ENCODE measurements at regions of chr20 and their contacts with region 1.

Region 1: GRCh38 chr20:53915446-53916172 is 154.8 kb downstream of the BCAS1 start:
- DNase-seq: peak; percentile 95 to 98
- H3K4me3 ChIP-seq: peak overlapping the region; percentile 61
- H3K27ac ChIP-seq: peak overlapping the region; percentile 93
- H3K4me1 ChIP-seq: peaks cover 47% of the 10 kb centered on the region
- H3K27me3 ChIP-seq: no peaks in the 10 kb centered on the region
- CTCF ChIP-seq: peak; percentile 97

Region 2: DNA sequence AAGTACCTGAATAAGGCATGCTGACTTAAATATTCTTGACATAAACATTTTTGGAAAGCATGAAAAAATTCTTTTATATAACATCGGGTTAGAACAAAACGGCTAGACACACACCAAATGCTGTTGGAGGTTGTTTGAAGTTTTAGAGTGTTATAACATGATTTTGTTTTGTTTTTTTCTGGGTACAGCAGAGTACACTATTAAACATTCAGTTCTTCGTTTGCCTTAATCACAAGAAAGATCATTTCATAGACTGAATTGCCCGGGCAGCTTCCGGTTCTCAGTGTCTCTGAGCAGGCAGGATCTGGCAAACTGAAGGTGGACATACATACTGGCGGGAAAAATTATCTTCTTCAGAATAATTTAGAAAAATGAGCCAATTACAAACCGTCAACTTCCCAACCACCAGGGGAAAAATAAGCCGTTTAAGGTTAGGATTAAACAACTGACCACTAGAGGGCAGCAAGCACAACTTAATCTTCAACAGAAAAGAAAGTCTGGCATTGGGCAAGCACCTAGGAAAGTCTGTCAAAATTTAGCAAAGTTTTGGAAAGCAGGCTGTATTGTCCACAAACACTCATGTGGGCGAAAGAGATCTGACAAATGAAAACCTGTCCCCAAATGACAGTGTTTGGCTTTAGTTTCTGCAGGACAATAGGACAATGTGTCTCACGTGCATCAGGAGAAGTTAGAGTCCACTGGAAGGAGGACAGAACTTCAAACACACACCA is 337.0 kb before region 1 on chr20:
- CTCF ChIA-PET with region 1: interaction called, 5 read pairs
- POLR2A ChIA-PET with region 1: no interaction called
- intact Hi-C with region 1: loop called (anchors 1 kb)
- DNase-seq: peak; percentile 61 to 77
- H3K4me3 ChIP-seq: peak overlapping the region; percentile 49
- H3K27ac ChIP-seq: peak overlapping the region; percentile 91
- H3K4me1 ChIP-seq: peaks cover 64% of the 10 kb centered on the region
- H3K27me3 ChIP-seq: no peaks in the 10 kb centered on the region
- CTCF ChIP-seq: peak; percentile 96

Region 3: DNA sequence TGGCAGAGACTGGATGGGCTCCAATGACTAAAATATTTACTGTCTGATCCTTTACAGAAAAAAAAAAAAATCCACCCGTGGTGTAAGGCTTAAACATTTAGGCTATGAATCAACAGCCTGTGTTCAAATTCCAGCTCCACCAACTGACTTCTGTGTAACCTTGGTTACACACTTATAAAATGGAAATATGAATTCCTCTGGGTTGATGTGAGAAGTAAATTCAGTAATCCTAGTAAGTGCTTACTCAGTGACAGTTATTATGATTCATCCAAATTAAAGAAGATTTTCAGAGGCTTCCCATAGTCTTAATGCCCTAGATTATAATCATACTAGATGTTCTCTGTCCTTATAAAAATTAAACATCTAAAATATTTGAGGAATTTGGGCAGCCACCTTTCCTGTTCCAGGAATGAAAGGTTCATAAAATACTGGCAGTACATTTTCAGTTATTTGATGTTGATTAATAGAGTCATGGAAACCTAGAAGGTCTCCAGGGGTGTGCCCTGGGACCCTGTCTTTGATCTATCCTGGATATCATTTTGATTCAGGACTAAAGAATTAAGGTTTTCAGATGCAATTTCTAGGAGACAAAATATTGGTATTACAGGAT is 141.7 kb before region 1 on chr20:
- CTCF ChIA-PET with region 1: interaction called, 3 read pairs
- POLR2A ChIA-PET with region 1: interaction called, 3 read pairs
- intact Hi-C with region 1: loop called (anchors 5 kb)
- DNase-seq: peak; percentile 37 to 99
- H3K4me3 ChIP-seq: no peak overlapping the region
- H3K27ac ChIP-seq: peak overlapping the region; percentile 93
- H3K4me1 ChIP-seq: peaks cover 41% of the 10 kb centered on the region
- H3K27me3 ChIP-seq: no peaks in the 10 kb centered on the region
- CTCF ChIP-seq: no peak

Region 4: GRCh38 chr20:53883098-53883811 is 32.4 kb before region 1 on chr20:
- CTCF ChIA-PET with region 1: interaction called, 14 read pairs
- POLR2A ChIA-PET with region 1: no interaction called
- intact Hi-C with region 1: no loop called
- DNase-seq: peak in 1 of 2 experiments; percentile 78
- H3K4me3 ChIP-seq: no peak overlapping the region
- H3K27ac ChIP-seq: peak overlapping the region; percentile 44
- H3K4me1 ChIP-seq: peaks cover 26% of the 10 kb centered on the region
- H3K27me3 ChIP-seq: no peaks in the 10 kb centered on the region
- CTCF ChIP-seq: no peak

Measured in PC-9 (cell line).